Cardiac septum (tissue), 1 donor: ENCODE measurements at regions of chr11 and their contacts with region 1.

Region 1: DNA sequence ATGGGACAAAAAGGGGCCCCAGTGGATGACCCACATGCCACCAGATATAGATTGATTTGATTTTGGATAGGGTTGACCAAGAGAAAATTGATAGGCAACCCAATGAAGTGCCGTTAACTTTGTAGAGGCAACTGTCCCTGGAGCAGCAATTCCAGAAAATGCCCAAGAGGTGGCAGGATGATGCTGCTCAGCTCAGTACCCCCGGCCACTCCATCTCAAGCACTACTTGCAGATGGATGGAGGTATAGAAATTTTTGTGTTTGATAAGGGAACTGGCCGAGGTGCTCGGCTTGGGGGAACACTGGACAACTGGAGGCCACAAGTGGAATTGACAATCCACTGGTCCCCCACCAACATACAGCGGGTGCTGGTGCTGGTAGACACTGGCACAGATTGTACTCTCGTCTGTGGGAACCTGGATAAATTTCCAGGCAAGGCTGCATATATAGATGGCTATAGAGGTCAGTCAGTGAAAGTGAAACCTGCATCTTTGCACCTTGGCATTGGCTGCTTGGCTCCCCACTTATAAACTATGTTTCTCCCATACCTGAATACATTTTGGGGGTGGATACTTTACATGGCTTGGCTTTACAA is 86.3 kb downstream of the CCDC83 start:
- DNase-seq: no peak

Region 2: DNA sequence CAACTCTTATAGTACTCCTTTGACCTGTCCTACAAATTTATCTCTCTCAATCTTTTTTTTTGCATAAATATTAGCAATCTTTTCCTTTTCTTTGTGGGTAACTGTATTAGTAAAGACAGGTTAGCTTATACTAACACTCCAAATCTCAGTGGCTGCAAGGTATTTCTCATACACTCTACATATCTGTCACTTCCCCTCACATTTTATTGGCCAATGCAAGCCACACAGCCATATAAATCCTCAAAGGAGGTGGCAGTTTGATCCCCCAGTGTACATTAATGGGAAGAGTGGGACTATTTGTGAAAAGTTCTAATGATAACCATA is 260.5 kb after region 1 on chr11:
- intact Hi-C with region 1: loop called (anchors 5 kb)
- DNase-seq: no peak

Region 3: GRCh38 chr11:86218125-86219084 is 276.9 kb after region 1 on chr11:
- intact Hi-C with region 1: loop called (anchors 2 kb)
- DNase-seq: no peak

Region 4: DNA sequence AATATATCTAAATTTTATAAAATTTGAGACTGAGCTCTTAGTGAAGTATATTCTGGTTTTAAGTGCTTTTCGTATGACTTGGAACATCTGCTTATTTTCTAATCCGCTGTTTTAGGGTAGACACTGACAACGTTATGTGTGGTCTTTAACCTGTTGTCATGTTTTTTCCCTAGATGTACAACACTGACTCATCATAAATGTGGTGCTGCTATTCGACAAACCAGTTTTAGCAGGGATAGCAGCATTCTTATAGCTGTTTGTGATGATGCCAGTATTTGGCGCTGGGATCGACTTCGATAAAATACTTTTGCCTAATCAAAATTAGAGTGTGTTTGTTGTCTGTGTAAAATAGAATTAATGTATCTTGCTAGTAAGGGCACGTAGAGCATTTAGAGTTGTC is 336.7 kb after region 1 on chr11:
- intact Hi-C with region 1: no loop called
- DNase-seq: no peak

Region 5: DNA sequence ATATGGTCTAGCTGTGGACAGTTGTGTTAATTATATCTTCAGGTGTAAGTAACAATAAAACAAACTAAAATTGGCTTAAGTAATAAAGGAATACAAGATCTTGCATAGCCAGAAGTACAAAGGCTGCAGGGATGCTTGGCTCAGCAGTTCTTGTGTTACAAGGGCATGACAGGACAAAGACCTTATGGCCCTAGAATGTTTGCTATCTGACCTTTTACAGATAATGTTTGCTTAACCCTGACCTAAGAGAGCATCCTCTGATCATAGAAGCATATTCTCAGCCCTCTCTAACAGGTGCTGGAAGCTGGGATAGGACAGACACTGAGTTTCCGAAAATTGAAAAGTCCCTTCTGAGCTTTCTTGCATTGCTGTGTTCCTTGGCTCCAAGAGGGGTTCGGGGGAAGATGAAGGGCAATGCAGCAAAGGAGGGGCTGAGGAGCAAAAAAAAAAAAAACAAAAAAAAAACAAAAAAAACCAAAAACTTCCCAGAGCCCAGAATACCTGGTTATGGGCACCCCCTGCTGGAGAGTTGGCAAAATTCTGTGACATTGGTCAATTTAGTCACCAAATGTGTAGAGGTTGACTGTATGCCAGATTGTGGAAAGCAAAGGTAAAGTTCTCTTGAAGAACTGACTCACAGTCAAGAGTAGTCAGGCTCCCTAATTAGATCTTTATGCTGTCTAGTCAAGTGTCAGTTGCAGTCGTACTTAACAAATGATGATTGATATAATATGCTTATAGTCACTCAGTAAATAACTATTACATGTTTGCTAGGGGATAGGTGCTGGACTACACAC is 350.2 kb after region 1 on chr11:
- intact Hi-C with region 1: loop called (anchors 5 kb)
- DNase-seq: no peak

Region 6: GRCh38 chr11:86418917-86419316 is 477.4 kb after region 1 on chr11:
- intact Hi-C with region 1: no loop called
- DNase-seq: no peak